ENCODE measurements at regions of chr2 and their contacts with region 1.

Region 1: DNA sequence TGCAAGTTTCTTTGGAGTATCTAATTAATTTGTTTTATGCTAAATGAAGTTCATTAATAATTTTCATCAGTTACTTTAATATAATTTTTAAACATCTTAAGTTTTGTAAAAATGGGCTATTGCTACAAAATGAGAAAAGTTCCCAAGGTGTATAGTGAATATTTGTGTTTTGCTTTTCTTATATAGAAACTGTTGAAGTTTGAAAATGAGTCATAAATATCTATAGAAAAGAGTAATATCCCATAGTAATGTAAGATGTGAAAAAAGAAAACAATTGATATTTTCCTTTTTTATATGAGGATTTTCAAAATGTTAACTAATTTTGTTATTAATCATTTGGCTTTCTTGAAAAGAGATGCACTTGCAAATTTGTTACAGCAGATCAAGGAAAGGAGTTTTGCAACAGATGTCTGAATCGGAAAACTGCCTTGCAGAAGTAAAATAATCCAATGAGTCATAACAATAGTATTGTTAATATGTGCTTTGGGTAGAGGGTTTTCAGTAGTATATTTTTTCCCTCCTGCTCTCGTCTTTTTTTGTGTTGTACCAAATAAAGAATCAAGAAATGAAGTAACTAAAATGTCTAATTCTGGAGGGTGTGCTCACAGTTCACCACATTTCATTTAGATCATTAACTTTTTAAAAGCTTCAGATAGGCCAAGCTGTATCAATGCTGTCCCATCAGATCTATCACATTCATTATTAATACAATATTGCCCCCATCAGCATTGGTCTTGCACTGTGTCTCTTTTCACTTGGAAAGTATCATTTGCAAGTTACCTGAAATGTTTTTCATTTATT is 15.5 kb downstream of the DUSP19 start:
- DNase-seq: peak in 1 of 2 experiments; percentile 14
- H3K4me3 ChIP-seq: no peak overlapping the region
- H3K4me3 Mint-ChIP-seq: no peak overlapping the region
- H3K27ac Mint-ChIP-seq: no peak overlapping the region
- H3K4me1 ChIP-seq: peaks cover 11% of the 10 kb centered on the region
- H3K4me1 Mint-ChIP-seq: peaks cover 6% of the 10 kb centered on the region
- H3K27me3 ChIP-seq: no peaks in the 10 kb centered on the region
- H3K27me3 Mint-ChIP-seq: no peaks in the 10 kb centered on the region
- CTCF ChIP-seq: peak in 1 of 2 experiments; percentile 12

Region 2: GRCh38 chr2:182666674-182667314 is 427.3 kb before region 1 on chr2:
- CTCF ChIA-PET with region 1: interaction called, 3 read pairs
- POLR2A ChIA-PET with region 1: no interaction called
- intact Hi-C with region 1: loop called (anchors 1 kb)
- DNase-seq: peak in 1 of 2 experiments; percentile 20
- H3K4me3 ChIP-seq: no peak overlapping the region
- H3K4me3 Mint-ChIP-seq: no peak overlapping the region
- H3K27ac Mint-ChIP-seq: no peak overlapping the region
- H3K4me1 ChIP-seq: no peaks in the 10 kb centered on the region
- H3K4me1 Mint-ChIP-seq: no peaks in the 10 kb centered on the region
- H3K27me3 ChIP-seq: no peaks in the 10 kb centered on the region; the same call in 1 of the 2 replicates
- H3K27me3 Mint-ChIP-seq: peaks cover 8% of the 10 kb centered on the region
- CTCF ChIP-seq: peak; percentile 69

Region 3: GRCh38 chr2:182763311-182763912 is 330.6 kb before region 1 on chr2:
- CTCF ChIA-PET with region 1: interaction called, 5 read pairs
- POLR2A ChIA-PET with region 1: no interaction called
- intact Hi-C with region 1: loop called (anchors 2 kb)
- DNase-seq: peak in 1 of 2 experiments; percentile 59
- H3K4me3 ChIP-seq: no peak overlapping the region
- H3K4me3 Mint-ChIP-seq: no peak overlapping the region
- H3K27ac Mint-ChIP-seq: no peak overlapping the region
- H3K4me1 ChIP-seq: no peaks in the 10 kb centered on the region
- H3K4me1 Mint-ChIP-seq: no peaks in the 10 kb centered on the region
- H3K27me3 ChIP-seq: no peaks in the 10 kb centered on the region
- H3K27me3 Mint-ChIP-seq: no peaks in the 10 kb centered on the region
- CTCF ChIP-seq: peak; percentile 64 to 71

Region 4: DNA sequence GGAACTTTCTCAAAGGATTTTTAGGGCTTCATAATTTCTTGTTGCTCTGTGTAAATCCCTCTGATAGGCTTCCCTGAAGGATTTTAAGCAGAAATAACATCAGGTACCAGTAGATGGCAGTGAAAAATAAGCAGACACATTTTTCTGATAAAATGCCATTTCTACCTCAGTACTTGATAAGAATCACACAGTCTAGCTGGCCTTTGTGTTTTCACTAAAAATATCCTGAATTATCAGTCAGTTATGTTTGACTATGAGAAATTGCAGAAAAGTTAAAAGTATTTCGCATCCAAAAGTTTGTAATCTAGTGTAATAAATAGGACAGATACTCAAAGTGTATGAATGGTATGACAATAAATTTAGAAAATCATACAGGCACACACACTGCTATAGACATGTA is 309.3 kb before region 1 on chr2:
- CTCF ChIA-PET with region 1: no interaction called
- POLR2A ChIA-PET with region 1: no interaction called
- intact Hi-C with region 1: loop called (anchors 1 kb)
- DNase-seq: peak in 1 of 2 experiments; percentile 48
- H3K4me3 ChIP-seq: no peak overlapping the region
- H3K4me3 Mint-ChIP-seq: no peak overlapping the region
- H3K27ac Mint-ChIP-seq: no peak overlapping the region
- H3K4me1 ChIP-seq: no peaks in the 10 kb centered on the region
- H3K4me1 Mint-ChIP-seq: no peaks in the 10 kb centered on the region
- H3K27me3 ChIP-seq: no peaks in the 10 kb centered on the region
- H3K27me3 Mint-ChIP-seq: no peaks in the 10 kb centered on the region
- CTCF ChIP-seq: peak; percentile 70 to 73

Region 5: GRCh38 chr2:183078465-183079138 is 15.5 kb before region 1 on chr2 and contains the start of gene DUSP19:
- CTCF ChIA-PET with region 1: no interaction called
- POLR2A ChIA-PET with region 1: no interaction called
- intact Hi-C with region 1: loop called (anchors 1 kb)
- DNase-seq: peak; percentile 97
- H3K4me3 ChIP-seq: peak within 1 kb of the TSS; percentile 53
- H3K4me3 Mint-ChIP-seq: peak within 1 kb of the TSS; percentile 92
- H3K27ac Mint-ChIP-seq: peak within 1 kb of the TSS; percentile 66
- H3K4me1 ChIP-seq: peaks cover 8% of the 10 kb centered on the region; the same call in 1 of the 2 replicates
- H3K4me1 Mint-ChIP-seq: no peaks in the 10 kb centered on the region
- H3K27me3 ChIP-seq: no peaks in the 10 kb centered on the region
- H3K27me3 Mint-ChIP-seq: no peaks in the 10 kb centered on the region
- CTCF ChIP-seq: no peak
- total RNA-seq, gene DUSP19: 3.6 and 3.9 TPM in 2 replicates